ENCODE measurements at regions of chr12 and their contacts with region 1.

Region 1: GRCh38 chr12:8226355-8226754 is 1.1 kb downstream of the FAM90A1 start:
- DNase-seq: no peak
- CTCF ChIP-seq: no peak

Region 2: DNA sequence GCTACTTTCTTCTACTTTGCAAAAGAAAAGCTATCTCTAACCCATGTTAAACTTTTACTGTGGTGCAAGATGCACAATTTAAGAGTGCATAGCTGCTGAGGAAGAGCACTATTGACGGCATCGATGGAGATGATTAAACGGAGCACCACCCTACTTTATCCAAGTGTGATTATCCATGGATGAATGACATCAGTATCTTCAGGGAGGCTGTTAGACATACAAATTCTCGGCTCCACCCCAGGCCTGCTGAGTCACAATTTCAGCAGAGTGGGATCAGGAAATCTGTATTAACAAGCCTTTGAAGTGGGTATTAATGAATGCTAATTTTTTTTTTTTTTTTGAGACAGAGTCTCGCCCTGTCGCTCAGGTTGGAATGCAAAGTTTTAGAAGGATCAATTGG is 369.8 kb before region 1 on chr12:
- in situ Hi-C with region 1: no loop called
- DNase-seq: no peak
- CTCF ChIP-seq: no peak

Region 3: DNA sequence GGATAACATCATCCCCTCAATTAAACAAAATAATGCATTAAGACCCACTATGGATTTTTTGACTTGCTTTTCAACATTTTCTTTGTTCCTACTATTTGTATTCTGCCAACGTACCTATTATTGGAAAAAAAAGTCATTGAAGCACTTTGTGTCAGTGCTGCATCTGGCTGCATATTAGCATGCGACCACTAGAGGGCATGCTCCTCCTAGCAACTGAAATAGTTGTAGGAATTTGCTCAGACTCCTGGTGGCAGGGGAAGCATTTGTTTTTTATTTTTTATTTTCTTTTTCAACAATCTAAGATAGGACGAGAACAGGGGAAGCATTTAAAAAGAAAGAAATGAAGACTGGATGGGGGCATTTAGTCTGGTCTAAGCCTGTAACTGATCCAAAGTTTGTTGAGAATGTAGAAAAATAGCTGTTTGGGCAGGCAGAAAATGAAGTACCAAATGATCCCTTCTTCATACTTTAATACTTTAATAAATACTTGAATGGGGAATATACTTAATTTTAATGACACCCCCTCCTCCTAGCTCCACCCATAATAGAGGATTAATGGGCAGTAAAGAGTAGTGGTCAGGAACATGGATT is 117.5 kb before region 1 on chr12:
- in situ Hi-C with region 1: loop called (anchors 10 kb)
- DNase-seq: peak; percentile 69
- CTCF ChIP-seq: peak; percentile 87

Measured in GM13976 (cell line).